ENCODE measurements at regions of chr1 and their contacts with region 1.

Region 1: DNA sequence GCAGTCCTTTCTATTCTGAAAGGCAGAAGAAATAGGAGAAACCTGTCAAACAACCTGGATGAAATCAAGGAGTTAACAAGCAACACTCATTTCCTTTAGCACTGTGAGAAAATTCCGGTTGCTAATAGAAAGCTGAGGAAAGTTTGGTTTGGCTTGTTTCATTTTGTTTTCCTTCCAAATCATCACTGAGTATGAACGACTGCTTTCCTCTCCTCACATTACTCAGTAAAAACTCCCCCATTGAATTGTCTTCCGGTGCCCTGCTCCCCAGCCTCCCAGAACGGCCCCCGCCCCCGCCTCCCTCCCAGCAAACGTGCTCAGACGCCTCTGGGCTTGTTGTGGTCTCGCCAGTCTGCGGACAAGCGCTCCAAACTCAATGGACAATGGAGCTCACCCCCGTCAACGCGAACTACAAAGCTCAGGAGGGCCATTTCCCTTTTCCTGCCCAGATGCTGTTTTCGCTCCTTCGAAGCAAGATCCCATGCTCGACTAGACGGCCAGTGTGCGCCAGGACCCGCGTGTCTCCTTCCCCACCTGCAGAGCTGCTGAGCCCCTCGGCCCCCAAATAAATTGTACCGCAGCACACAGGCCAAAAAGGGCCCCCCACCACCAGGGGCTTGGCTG is 747 bp downstream of the STX6 start:
- DNase-seq: peak; percentile 85

Region 2: DNA sequence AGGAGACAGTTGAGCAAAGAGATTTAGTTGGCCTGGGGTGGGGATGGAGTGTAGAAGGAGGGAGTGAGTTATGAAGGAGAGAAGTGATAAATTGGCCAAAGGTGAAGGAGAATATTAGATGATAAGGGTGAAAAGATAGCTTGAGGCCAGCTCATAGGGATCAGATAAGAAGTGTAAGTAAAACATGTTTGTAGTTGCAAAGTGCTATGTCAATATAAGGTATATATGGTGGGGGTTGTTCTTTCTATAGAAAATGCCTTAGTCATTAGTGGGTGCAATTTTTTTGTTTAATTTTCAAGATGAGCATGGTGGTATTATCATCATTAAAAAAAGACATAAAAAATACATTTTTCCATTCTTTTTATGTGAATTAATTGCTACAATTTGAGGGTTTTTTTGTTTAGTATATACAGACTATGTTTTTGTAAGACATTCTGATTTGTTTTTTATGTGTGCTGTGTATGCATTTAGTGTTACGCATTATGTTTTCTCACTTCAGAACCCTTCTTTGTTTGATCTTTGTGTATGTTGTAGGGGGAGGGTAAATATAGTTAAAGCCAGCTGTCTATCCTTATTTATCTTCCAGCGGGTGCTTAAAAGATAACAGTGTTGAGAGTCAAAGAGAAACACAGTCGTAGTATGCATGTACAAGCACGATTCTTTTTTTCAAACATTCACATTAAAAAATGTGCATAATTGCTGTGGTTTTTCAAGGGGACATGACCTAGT is 206.9 kb before region 1 on chr1:
- intact Hi-C with region 1: no loop called
- DNase-seq: no peak

Region 3: DNA sequence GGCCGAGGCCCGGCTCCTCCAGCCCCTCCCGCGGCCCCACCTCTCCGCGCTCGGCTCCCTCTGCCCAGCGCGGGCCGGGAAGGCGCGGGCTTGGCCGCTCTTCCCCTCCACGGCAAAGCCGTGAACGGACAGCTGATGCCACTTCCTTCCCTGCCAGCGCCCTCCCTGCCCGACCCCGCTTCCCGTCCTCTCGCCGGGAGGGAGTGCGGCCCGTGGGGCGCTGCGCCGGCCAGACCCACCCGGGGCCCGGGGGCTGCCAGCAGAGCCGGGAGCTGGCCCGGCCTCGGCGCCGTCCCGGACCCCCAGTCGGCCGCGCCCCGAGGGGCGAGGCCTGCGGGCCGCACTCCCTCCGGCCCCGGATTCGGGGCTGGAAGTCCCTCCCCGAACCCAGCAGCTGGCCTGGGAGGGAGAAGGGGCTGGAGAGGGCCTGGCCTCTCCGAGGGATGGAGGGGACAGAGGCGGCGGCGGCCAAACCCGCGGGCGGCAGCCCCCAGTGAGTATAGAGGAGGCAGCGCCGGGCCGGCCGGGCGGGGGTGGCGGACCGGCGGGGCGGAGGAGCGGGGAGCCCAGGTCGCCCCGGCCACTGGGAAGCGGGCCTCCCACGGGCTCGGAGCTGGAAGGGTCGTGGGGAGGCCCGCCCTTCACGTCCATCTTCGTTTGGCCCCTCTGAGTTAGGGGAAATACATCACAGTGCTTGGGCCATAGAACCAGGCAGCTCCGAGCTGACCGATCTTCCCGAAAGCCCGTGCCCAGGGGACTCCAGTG is 108.9 kb before region 1 on chr1 and contains the start of gene KIAA1614:
- intact Hi-C with region 1: loop called (anchors 2 kb)
- DNase-seq: peak; percentile 82
- total RNA-seq, gene KIAA1614: 11.4 TPM